Activated naive CD4-positive, alpha-beta T cell treated with anti-CD3 and anti-CD28 coated beads, Interleukin-2, amount 10 ng/mL, durations not matched to agents 7 days and 5 days (primary cell): ENCODE measurements at regions of chr2 and their contacts with region 1.

Region 1: GRCh38 chr2:197113275-197113711 is 186.8 kb upstream of the PGAP1 start:
- DNase-seq: no peak
- H3K4me3 Mint-ChIP-seq: no peak overlapping the region
- H3K27ac Mint-ChIP-seq: no peak overlapping the region
- H3K4me1 Mint-ChIP-seq: peaks cover 15% of the 10 kb centered on the region
- H3K27me3 Mint-ChIP-seq: no peaks in the 10 kb centered on the region

Region 2: DNA sequence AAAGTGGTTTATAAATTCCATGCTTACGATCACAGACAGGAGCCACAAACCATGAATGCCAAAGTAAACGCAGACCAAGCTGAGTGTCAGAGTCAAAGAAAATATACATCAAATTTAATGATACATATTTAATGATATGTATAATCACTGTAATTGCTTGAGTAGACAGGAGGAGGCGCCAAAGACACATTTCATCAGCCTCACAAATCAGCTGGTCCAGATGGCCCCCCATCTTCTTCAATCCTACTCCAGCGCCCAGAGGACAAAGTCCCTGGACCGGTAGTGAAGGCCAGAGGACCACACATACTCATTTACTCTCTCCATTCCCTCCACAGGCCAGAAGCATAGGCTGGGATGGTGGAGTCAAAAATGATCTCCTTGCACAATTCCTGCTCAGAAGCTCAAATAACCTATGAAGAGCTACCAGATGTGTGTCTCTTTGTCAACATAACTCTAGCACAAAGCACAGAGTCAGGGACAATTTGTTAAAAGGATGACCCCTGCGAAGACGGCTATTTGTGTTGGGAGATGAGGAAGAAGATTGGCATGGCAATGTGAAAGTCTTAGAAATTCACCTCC is 37.4 kb before region 1 on chr2:
- CTCF ChIA-PET with region 1: interaction called, 11 read pairs
- DNase-seq: no peak
- H3K4me3 Mint-ChIP-seq: no peak overlapping the region
- H3K27ac Mint-ChIP-seq: peak overlapping the region; percentile 43
- H3K4me1 Mint-ChIP-seq: peaks cover 30% of the 10 kb centered on the region
- H3K27me3 Mint-ChIP-seq: no peaks in the 10 kb centered on the region

Region 3: DNA sequence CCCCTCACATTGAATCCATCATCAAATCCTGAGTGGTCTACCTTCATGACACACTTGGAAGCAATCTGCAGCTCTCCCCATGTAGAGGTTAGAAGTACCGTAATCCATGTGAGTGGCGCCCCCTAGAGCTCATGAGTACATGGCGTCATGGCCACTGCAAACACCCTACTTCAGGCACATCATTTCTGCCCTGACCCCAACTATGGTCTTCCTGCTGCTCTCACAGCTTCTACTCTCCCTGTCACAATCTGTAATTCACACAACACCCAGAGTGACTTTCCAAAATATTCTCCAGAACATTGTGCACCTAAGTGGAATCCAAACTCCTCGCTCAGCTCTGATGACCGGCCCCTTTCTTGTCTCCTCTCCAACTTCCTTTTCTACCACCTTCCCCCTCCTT is 55.4 kb after region 1 on chr2:
- CTCF ChIA-PET with region 1: interaction called, 68 read pairs
- DNase-seq: peak; percentile 77
- H3K4me3 Mint-ChIP-seq: no peak overlapping the region
- H3K27ac Mint-ChIP-seq: no peak overlapping the region
- H3K4me1 Mint-ChIP-seq: peaks cover 37% of the 10 kb centered on the region
- H3K27me3 Mint-ChIP-seq: no peaks in the 10 kb centered on the region

Region 4: GRCh38 chr2:197310271-197310985 is 197.1 kb after region 1 on chr2 and contains the start of gene ANKRD44:
- CTCF ChIA-PET with region 1: interaction called, 31 read pairs
- DNase-seq: peak; percentile 91
- H3K4me3 Mint-ChIP-seq: peak within 1 kb of the TSS; percentile 95
- H3K27ac Mint-ChIP-seq: peak within 1 kb of the TSS; percentile 93
- H3K4me1 Mint-ChIP-seq: peaks cover 57% of the 10 kb centered on the region
- H3K27me3 Mint-ChIP-seq: no peaks in the 10 kb centered on the region

Region 5: DNA sequence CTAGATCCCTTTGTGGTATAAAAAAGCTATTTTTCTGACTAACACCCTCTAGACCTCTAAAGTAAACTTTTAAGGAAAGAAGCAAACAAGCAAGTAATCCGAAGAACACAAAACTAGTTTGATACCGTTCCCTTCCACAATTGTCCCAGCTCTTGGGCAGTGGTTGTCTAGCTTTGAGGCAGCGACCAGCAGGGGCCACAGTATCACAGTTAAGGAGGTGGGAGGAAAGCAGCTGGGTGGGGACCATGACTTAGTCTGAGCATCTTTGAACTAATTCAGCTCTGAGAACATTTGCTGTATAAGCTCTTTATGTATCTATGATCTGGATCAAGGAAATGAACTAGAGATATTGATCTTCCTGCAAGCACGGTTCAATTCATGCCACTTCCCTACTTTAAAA is 270.5 kb after region 1 on chr2:
- CTCF ChIA-PET with region 1: interaction called, 37 read pairs
- DNase-seq: no peak
- H3K4me3 Mint-ChIP-seq: no peak overlapping the region
- H3K27ac Mint-ChIP-seq: no peak overlapping the region
- H3K4me1 Mint-ChIP-seq: peaks cover 3% of the 10 kb centered on the region
- H3K27me3 Mint-ChIP-seq: peaks cover 21% of the 10 kb centered on the region